Endothelial cell of umbilical vein (primary cell): ENCODE measurements at regions of chr3 and their contacts with region 1.

Region 1: DNA sequence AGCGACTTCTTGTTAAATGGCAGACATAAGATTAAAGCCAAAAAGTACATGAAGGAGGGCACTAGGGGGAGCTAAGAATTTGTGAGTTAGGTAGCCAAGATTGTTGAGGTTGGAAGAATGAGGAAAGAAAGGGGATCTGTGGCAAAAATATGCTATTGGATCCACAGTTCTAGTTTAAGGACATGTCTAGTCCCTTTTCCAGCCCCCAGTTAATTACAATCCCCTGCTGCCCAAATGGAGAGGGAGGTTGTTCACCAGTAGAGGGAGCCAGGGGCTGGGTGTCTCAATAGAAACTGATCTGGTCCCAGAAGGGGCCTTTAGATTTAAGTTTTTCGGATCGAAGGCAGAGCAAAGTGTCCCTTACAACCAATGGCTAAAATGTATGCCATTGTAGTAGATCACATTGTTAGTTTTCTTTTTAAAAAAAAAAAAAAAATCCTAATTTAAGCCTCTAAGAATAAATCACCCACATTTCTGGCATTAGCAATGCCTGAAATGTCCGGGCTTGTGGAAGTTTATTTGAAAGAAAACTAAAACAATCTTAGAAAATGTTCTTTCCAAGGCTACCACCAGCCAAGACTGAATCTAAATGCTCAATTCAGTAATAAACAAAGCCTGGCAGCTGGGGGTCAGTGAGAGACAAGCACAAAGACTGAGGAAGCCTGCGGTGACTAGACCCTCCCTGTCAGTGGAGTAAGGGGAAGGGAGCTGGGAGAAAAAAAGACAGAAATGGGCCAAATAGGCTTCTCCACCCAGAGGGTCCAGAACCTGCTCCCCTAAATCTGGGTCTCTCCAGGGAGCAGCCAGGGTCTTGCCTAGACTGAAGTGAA is 7.1 kb downstream of the COL8A1 start:
- DNase-seq: peak; percentile 76
- H3K4me3 ChIP-seq: no peak overlapping the region
- H3K27ac ChIP-seq: peak overlapping the region; percentile 75
- H3K4me1 ChIP-seq: peaks cover 97% of the 10 kb centered on the region
- H3K27me3 ChIP-seq: no peaks in the 10 kb centered on the region
- CTCF ChIP-seq: peak; percentile 47 to 68
- POLR2A ChIP-seq: peak; percentile 34

Region 2: DNA sequence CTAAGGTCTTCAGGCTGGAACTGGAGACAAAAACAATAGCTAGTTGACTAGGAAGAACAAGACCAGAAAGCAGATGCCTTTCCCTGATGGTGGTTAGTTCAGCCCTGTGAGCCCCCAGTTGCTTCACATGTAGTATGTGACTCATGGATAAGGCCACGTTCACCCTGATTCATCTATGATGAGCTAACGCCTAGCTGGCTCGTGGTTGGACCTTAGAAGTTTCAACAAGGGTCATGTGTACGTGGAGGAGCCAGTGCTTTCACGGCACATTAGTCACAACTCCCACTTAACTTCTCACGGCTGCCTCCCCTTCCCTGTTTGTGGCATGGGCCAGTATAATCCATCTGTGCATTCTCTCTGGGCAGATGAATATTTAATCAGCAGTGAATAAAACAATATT is 13.5 kb after region 1 on chr3:
- CTCF ChIA-PET with region 1: interaction called, 101 read pairs
- POLR2A ChIA-PET with region 1: interaction called, 4 read pairs
- dilution Hi-C with region 1: no loop called
- intact Hi-C with region 1: loop called (anchors 1 kb)
- DNase-seq: peak; percentile 91
- H3K4me3 ChIP-seq: no peak overlapping the region
- H3K27ac ChIP-seq: peak overlapping the region; percentile 98
- H3K4me1 ChIP-seq: peaks cover 32% of the 10 kb centered on the region
- H3K27me3 ChIP-seq: no peaks in the 10 kb centered on the region
- CTCF ChIP-seq: no peak
- POLR2A ChIP-seq: peak; percentile 72

Region 3: DNA sequence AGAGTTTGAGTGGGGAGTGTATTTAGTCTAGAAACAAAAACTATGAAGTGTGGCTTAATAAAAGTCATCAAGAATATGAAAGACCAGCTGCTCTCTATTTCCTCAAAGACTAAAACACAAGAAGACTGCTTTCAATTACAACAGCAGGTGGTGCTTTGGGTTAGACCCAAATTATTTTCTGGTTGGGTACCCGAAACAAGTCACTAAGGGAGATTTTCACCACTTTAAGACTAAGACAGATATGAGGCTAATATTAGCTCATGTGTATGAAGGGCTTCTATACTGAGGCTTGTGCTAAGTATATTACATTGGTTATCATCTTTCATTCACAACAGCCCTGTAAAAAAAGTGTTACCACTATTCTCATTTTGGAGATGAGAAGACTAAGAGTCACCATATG is 36.0 kb after region 1 on chr3:
- CTCF ChIA-PET with region 1: interaction called, 48 read pairs
- POLR2A ChIA-PET with region 1: no interaction called
- dilution Hi-C with region 1: no loop called
- intact Hi-C with region 1: no loop called
- DNase-seq: no peak
- H3K4me3 ChIP-seq: no peak overlapping the region
- H3K27ac ChIP-seq: no peak overlapping the region
- H3K4me1 ChIP-seq: no peaks in the 10 kb centered on the region
- H3K27me3 ChIP-seq: no peaks in the 10 kb centered on the region
- CTCF ChIP-seq: no peak
- POLR2A ChIP-seq: no peak

Region 4: GRCh38 chr3:99699841-99700240 is 54.3 kb after region 1 on chr3:
- CTCF ChIA-PET with region 1: interaction called, 10 read pairs
- POLR2A ChIA-PET with region 1: no interaction called
- dilution Hi-C with region 1: no loop called
- intact Hi-C with region 1: no loop called
- DNase-seq: peak; percentile 83
- H3K4me3 ChIP-seq: no peak overlapping the region
- H3K27ac ChIP-seq: peak overlapping the region; percentile 89
- H3K4me1 ChIP-seq: peaks cover 32% of the 10 kb centered on the region
- H3K27me3 ChIP-seq: no peaks in the 10 kb centered on the region
- CTCF ChIP-seq: no peak
- POLR2A ChIP-seq: no peak

Region 5: DNA sequence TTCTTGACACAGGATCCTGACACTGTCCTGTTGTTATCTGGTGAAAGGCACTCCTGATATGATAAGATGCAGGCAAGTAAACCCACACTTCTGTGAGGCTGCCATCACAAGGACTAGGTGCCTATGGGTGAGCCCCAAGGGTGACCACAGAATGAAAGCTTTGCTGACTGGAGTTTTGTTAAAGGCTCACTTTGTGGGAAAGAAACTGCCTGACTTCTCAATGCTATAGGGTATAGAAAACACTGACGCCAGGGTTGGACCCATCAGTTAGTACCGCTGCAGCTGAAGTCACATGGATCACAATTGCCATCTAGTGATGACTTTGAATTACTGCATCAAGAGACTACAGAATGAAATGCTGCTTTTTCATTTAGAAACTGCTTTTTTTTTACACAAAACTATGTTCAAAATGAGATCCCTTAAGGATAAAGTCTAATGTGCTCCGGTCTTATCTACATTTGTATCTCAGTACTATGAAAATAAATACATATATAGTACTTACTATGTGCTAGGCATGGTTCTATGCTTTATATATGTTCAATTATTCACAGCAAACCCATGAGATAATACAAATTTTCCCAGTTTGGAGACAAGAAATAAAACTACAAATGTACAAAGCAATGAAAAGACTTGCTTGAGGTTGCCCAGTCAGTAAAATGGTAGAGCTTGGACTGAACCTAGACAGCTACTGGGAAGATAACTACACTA is 107.9 kb after region 1 on chr3:
- CTCF ChIA-PET with region 1: interaction called, 29 read pairs
- POLR2A ChIA-PET with region 1: no interaction called
- dilution Hi-C with region 1: no loop called
- intact Hi-C with region 1: loop called (anchors 1 kb)
- DNase-seq: peak; percentile 77
- H3K4me3 ChIP-seq: no peak overlapping the region
- H3K27ac ChIP-seq: peak overlapping the region; percentile 21
- H3K4me1 ChIP-seq: peaks cover 28% of the 10 kb centered on the region
- H3K27me3 ChIP-seq: no peaks in the 10 kb centered on the region
- CTCF ChIP-seq: peak; percentile 56 to 58
- POLR2A ChIP-seq: no peak